RWPE1 (cell line): ENCODE measurements at regions of chr1 and their contacts with region 1.

Region 1: GRCh38 chr1:244603498-244603897 is 49.4 kb upstream of the DESI2 start:
- DNase-seq: peak; percentile 30
- H3K27ac ChIP-seq: no peak overlapping the region
- CTCF ChIP-seq: peak; percentile 82

Region 2: GRCh38 chr1:244796718-244797406 is 193.4 kb after region 1 on chr1:
- CTCF ChIA-PET with region 1: interaction called, 22 read pairs
- POLR2A ChIA-PET with region 1: no interaction called
- DNase-seq: peak; percentile 48
- H3K27ac ChIP-seq: no peak overlapping the region
- CTCF ChIP-seq: peak; percentile 84